ENCODE measurements at regions of chr6 and their contacts with region 1.

Region 1: DNA sequence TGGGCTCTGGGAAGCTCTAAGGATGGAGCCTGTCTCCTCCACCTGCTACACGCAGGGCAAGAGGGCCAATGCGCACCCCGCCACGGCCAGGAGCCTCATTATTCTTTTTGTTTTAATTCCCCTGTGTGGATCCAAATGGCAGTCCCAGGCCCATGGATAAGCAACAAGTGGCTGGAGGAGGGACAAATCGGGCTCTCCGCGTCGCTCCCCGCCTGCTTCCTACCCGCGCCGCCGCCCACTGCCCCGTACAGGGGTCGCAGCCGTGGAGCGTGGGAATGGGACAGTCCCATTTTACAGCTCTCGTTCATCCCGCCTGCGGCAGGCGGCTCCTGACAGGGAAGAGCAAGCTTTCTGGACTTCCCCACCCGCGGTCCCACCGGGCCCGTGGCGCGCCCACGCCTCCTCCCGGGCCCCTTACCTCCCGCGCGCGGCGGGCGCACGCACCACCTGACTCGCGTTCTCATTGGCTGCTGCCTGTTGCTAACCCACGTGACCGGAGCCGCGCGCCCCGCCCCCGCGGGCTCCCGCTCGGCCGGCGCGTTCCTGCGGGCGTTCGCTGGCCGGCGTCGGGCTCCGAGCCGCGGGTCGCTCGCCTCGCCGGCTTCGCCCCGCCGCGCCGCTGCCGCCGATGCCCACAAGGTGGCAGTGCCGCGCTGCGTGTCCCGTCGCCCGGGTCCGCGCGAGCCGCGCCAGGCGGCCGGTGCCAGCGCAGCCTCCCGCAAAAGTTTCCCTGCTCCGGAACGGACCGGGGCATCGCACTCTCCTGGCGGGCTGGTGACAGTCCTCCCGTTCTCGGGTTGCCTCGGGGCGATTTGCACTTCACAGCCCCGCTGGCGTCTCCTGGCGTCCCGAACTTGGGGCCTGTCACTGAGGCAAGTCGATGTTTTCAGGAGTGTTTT is 93.3 kb downstream of the CD83 start:
- DNase-seq: peak; percentile 97
- H3K4me3 ChIP-seq: peak overlapping the region; percentile 66 to 72 (median 70)
- H3K27ac ChIP-seq: peak overlapping the region; percentile 73 to 87 (median 80)
- H3K4me1 ChIP-seq: peaks cover 8 to 20% (median 14%) of the 10 kb centered on the region in 4 donors
- H3K27me3 ChIP-seq: no peaks in the 10 kb centered on the region
- CTCF ChIP-seq: peak; percentile 75 to 96 (median 75)
- EP300 ChIP-seq: no peak
- POLR2A ChIP-seq: peak; percentile 25

Region 2: DNA sequence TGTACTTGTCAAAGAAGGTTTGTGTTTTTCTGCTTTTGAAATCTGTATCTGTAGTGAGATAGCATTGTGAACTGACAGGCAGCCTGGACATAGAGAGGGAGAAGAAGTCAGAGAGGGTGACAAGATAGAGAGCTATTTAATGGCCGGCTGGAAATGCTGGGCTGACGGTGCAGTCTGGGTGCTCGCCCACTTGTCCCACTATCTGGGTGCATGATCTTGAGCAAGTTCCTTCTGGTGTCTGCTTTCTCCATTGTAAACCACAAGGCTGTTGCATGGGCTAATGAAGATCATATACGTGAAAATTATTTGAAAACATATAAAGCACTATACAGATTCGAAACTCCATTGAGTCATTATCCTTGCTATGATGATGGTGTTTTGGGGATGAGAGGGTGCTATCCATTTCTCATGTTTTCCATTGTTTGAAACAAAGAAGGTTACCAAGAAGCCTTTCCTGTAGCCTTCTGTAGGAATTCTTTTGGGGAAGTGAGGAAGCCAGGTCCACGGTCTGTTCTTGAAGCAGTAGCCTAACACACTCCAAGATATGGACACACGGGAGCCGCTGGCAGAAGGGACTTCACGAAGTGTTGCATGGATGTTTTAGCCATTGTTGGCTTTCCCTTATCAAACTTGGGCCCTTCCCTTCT is 74.9 kb before region 1 on chr6:
- intact Hi-C with region 1: no loop called
- DNase-seq: no peak
- H3K4me3 ChIP-seq: no peak overlapping the region
- H3K27ac ChIP-seq: no peak overlapping the region
- H3K4me1 ChIP-seq: no peaks in the 10 kb centered on the region
- H3K27me3 ChIP-seq: no peaks in the 10 kb centered on the region
- CTCF ChIP-seq: no peak
- EP300 ChIP-seq: no peak
- POLR2A ChIP-seq: no peak

Region 3: GRCh38 chr6:14149053-14149738 is 61.7 kb before region 1 on chr6:
- intact Hi-C with region 1: no loop called
- DNase-seq: no peak
- H3K4me3 ChIP-seq: no peak overlapping the region
- H3K27ac ChIP-seq: no peak overlapping the region
- H3K4me1 ChIP-seq: no peaks in the 10 kb centered on the region
- H3K27me3 ChIP-seq: no peaks in the 10 kb centered on the region
- CTCF ChIP-seq: no peak
- EP300 ChIP-seq: no peak
- POLR2A ChIP-seq: no peak

Region 4: DNA sequence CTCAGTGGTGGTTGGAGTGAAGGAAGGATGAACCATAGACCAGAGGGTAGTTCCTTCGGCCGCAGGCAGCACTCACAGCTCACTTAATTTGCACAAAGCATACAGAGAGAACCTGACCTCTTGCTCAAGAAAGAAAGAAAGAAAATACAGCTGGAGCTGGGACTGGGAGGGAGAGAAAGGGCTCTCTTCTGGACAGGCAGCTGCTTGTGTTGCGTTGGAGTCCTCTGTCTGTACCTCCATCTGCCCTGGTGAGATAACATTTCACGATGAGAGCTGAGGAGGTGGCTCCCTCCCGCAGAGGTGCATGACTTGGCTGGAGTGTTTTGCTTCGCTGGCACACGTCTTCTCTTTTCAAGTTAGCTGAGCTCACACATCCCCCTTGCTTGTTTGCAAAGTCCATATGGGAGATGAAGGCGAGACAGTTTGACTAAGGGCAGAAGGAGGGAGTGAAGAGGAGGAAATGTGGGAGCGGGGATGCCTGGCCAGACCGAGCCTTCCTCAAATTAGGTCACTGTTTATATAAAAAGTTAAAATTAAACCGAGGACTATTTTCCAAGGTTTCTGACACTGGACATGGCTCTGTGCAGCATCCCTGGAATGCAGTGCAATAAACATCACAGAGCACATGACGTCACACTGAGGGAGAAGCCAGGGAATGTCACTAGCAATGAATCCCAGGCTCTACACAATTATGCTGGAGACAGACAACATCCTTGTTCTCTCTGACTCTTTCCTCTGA is 266.1 kb after region 1 on chr6:
- intact Hi-C with region 1: loop called (anchors 5 kb)
- DNase-seq: no peak
- H3K4me3 ChIP-seq: peak overlapping the region; percentile 35 to 42 (median 38)
- H3K27ac ChIP-seq: peak overlapping the region; percentile 87 to 90 (median 88)
- H3K4me1 ChIP-seq: peaks cover 17 to 33% (median 32%) of the 10 kb centered on the region in 4 donors
- H3K27me3 ChIP-seq: no peaks in the 10 kb centered on the region
- CTCF ChIP-seq: no peak
- EP300 ChIP-seq: peak; percentile 95
- POLR2A ChIP-seq: no peak

Region 5: GRCh38 chr6:15245361-15246216 is 1034.7 kb after region 1 on chr6 and contains the start of gene JARID2:
- intact Hi-C with region 1: loop called (anchors 5 kb)
- DNase-seq: peak; percentile 99
- H3K4me3 ChIP-seq: peak within 1 kb of the TSS; percentile 81 to 91 (median 82)
- H3K27ac ChIP-seq: peak within 1 kb of the TSS; percentile 91 to 98 (median 97)
- H3K4me1 ChIP-seq: peaks cover 24 to 38% (median 29%) of the 10 kb centered on the region in 4 donors
- H3K27me3 ChIP-seq: no peaks in the 10 kb centered on the region
- CTCF ChIP-seq: peak in 1 of 3 experiments; percentile 8
- EP300 ChIP-seq: no peak
- POLR2A ChIP-seq: peak; percentile 54
- total RNA-seq, gene JARID2: 5.8 to 10.4 (median 8.1) TPM

Region 6: GRCh38 chr6:15399641-15400470 is 1188.9 kb after region 1 on chr6:
- intact Hi-C with region 1: loop called (anchors 5 kb)
- DNase-seq: peak; percentile 94
- H3K4me3 ChIP-seq: peak overlapping the region; percentile 46 to 54 (median 52)
- H3K27ac ChIP-seq: peak overlapping the region; percentile 44 to 73 (median 67)
- H3K4me1 ChIP-seq: peaks cover 53 to 60% (median 57%) of the 10 kb centered on the region in 4 donors
- H3K27me3 ChIP-seq: no peaks in the 10 kb centered on the region
- CTCF ChIP-seq: no peak
- EP300 ChIP-seq: no peak
- POLR2A ChIP-seq: no peak

Region 7: GRCh38 chr6:15491255-15491985 is 1280.5 kb after region 1 on chr6:
- intact Hi-C with region 1: loop called (anchors 5 kb)
- DNase-seq: peak; percentile 95
- H3K4me3 ChIP-seq: no peak overlapping the region
- H3K27ac ChIP-seq: peak overlapping the region; percentile 1 to 50 (median 34)
- H3K4me1 ChIP-seq: peaks cover 31 to 50% (median 36%) of the 10 kb centered on the region in 4 donors
- H3K27me3 ChIP-seq: no peaks in the 10 kb centered on the region
- CTCF ChIP-seq: peak; percentile 86 to 97 (median 95)
- EP300 ChIP-seq: no peak
- POLR2A ChIP-seq: no peak

Region 8: DNA sequence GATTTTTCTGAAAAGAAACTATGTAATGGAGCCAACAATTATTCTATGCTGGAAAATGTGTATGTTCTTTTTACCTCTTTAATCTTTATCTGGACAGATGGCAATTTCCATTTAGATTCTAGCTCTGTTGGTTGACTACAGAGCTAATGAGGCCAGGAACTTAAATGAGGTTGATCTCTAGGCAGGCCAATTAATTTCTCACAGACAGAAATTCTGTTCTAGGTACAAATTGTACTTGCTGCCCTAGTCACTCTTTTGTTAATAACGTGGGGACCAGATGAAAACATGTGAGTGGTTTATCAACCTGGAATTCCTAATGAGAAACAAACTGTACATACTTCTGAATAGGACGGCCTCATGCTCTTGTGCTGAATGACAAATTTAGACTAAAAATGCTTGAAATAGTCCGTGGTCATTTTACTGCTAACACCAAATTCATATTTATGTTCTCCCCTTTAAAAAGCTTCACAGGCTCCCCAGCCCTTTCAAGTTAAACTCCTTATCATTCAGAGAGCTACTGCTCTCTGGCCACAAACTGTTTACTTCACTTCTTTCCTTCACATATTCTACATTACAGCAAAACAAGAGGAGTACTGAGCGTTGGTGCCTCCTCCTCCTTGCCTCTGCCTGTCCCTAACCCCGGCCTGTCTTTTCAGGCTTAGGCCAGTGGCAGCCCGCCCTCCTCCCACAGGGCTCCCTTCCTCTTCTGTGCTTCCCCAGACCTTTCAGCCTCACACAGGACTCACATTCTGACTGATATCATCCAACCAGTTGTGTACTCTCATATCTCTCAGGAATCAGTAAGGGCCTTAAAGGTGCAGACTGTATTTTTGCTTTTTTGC is 1410.5 kb after region 1 on chr6:
- intact Hi-C with region 1: loop called (anchors 5 kb)
- DNase-seq: no peak
- H3K4me3 ChIP-seq: no peak overlapping the region
- H3K27ac ChIP-seq: peak overlapping the region; percentile 41 to 69 (median 63)
- H3K4me1 ChIP-seq: peaks cover 31 to 37% (median 33%) of the 10 kb centered on the region in 4 donors
- H3K27me3 ChIP-seq: no peaks in the 10 kb centered on the region
- CTCF ChIP-seq: no peak
- EP300 ChIP-seq: peak; percentile 5
- POLR2A ChIP-seq: no peak

Measured in esophagus muscularis mucosa (tissue), 4 donors.